Activated CD8-positive, alpha-beta T cell treated with anti-CD3 and anti-CD28 coated beads for 36 hours (primary cell): ENCODE measurements at regions of chr17 and their contacts with region 1.

Region 1: GRCh38 chr17:64025732-64026294 is 5.4 kb upstream of the ICAM2 start:
- DNase-seq: peak; percentile 96
- ATAC-seq: peak; percentile 77
- H3K4me3 Mint-ChIP-seq: peak overlapping the region; percentile 65
- H3K27ac Mint-ChIP-seq: peak overlapping the region; percentile 85
- H3K4me1 Mint-ChIP-seq: peaks cover 58% of the 10 kb centered on the region
- H3K27me3 Mint-ChIP-seq: no peaks in the 10 kb centered on the region
- CTCF ChIP-seq: peak; percentile 97

Region 2: GRCh38 chr17:63881876-63882601 is 143.8 kb before region 1 on chr17 and contains the start of gene GH2:
- CTCF ChIA-PET with region 1: no interaction called
- POLR2A ChIA-PET with region 1: no interaction called
- intact Hi-C with region 1: no loop called
- DNase-seq: peak; percentile 77
- ATAC-seq: peak; percentile 99
- H3K4me3 Mint-ChIP-seq: no peak within 1 kb of the TSS
- H3K27ac Mint-ChIP-seq: no peak within 1 kb of the TSS
- H3K4me1 Mint-ChIP-seq: no peaks in the 10 kb centered on the region
- H3K27me3 Mint-ChIP-seq: no peaks in the 10 kb centered on the region
- CTCF ChIP-seq: peak; percentile 56
- total RNA-seq, gene GH2: not detected

Region 3: GRCh38 chr17:63919311-63919723 is 106.5 kb before region 1 on chr17:
- CTCF ChIA-PET with region 1: interaction called, 58 read pairs
- POLR2A ChIA-PET with region 1: interaction called, 6 read pairs
- intact Hi-C with region 1: loop called (anchors 5 kb)
- DNase-seq: peak; percentile 80
- ATAC-seq: peak; percentile 99
- H3K4me3 Mint-ChIP-seq: no peak overlapping the region
- H3K27ac Mint-ChIP-seq: no peak overlapping the region
- H3K4me1 Mint-ChIP-seq: peaks cover 5% of the 10 kb centered on the region
- H3K27me3 Mint-ChIP-seq: no peaks in the 10 kb centered on the region
- CTCF ChIP-seq: peak; percentile 95

Region 4: DNA sequence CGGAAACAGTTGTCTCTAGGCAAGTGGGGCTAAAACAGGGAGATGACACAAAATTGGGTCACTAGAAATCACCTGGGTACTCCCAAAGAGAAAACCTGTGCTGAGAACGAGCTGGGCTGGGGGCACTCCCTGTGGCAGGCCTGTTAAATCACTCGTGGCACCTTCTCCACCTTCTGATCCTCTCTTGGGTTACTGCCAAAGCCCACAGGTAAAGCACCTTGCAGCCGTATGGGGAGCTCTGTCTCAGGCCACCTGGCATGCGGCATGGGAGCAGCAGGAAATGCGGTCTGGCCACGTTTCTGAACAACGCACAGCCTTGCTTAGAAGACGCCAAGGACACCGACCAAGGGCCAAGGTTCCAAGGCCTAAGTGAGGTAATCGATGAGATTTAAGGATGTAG is 16.1 kb after region 1 on chr17:
- CTCF ChIA-PET with region 1: interaction called, 32 read pairs
- POLR2A ChIA-PET with region 1: interaction called, 5 read pairs
- intact Hi-C with region 1: no loop called
- DNase-seq: no peak
- ATAC-seq: no peak
- H3K4me3 Mint-ChIP-seq: no peak overlapping the region
- H3K27ac Mint-ChIP-seq: peak overlapping the region; percentile 48
- H3K4me1 Mint-ChIP-seq: peaks cover 2% of the 10 kb centered on the region
- H3K27me3 Mint-ChIP-seq: no peaks in the 10 kb centered on the region
- CTCF ChIP-seq: no peak

Region 5: GRCh38 chr17:64063766-64064224 is 38.0 kb after region 1 on chr17:
- CTCF ChIA-PET with region 1: interaction called, 39 read pairs
- POLR2A ChIA-PET with region 1: interaction called, 4 read pairs
- intact Hi-C with region 1: no loop called
- DNase-seq: peak; percentile 78
- ATAC-seq: peak; percentile 45
- H3K4me3 Mint-ChIP-seq: peak overlapping the region; percentile 54
- H3K27ac Mint-ChIP-seq: peak overlapping the region; percentile 78
- H3K4me1 Mint-ChIP-seq: peaks cover 73% of the 10 kb centered on the region
- H3K27me3 Mint-ChIP-seq: no peaks in the 10 kb centered on the region
- CTCF ChIP-seq: peak; percentile 71

Region 6: GRCh38 chr17:64216338-64217248 is 190.8 kb after region 1 on chr17:
- CTCF ChIA-PET with region 1: no interaction called
- POLR2A ChIA-PET with region 1: no interaction called
- intact Hi-C with region 1: no loop called
- DNase-seq: peak; percentile 13
- ATAC-seq: no peak
- H3K4me3 Mint-ChIP-seq: no peak overlapping the region
- H3K27ac Mint-ChIP-seq: no peak overlapping the region
- H3K4me1 Mint-ChIP-seq: peaks cover 32% of the 10 kb centered on the region
- H3K27me3 Mint-ChIP-seq: no peaks in the 10 kb centered on the region
- CTCF ChIP-seq: no peak

Region 7: GRCh38 chr17:64281962-64282727 is 256.3 kb after region 1 on chr17:
- CTCF ChIA-PET with region 1: interaction called, 15 read pairs
- POLR2A ChIA-PET with region 1: no interaction called
- intact Hi-C with region 1: no loop called
- DNase-seq: peak; percentile 74
- ATAC-seq: peak; percentile 77
- H3K4me3 Mint-ChIP-seq: no peak overlapping the region
- H3K27ac Mint-ChIP-seq: no peak overlapping the region
- H3K4me1 Mint-ChIP-seq: peaks cover 2% of the 10 kb centered on the region
- H3K27me3 Mint-ChIP-seq: no peaks in the 10 kb centered on the region
- CTCF ChIP-seq: peak; percentile 84